ENCODE measurements at regions of chr17 and their contacts with region 1.

Region 1: DNA sequence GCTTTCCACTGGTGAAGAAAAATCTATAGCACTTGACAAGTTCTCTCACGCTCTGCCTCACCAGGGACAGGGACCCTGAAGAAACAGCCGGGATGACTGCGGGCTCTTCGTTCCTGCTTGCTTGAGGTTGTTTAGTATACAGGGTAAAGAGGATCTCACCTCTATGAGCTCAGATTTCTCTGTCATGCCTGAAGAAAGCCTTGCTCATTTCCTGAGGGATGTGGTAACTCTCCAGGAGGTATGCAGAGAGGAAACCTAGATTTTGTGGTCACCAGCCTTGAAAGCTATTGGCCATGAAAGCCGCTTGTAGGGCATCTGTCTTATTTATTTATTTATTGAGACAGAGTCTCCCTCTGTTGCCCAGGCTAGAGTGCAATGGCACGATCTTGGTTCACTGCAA is 23.2 kb downstream of the USP43 start:
- DNase-seq: no peak
- ATAC-seq: no peak
- H3K4me3 ChIP-seq: no peak overlapping the region
- H3K4me3 Mint-ChIP-seq: no peak overlapping the region
- H3K27ac ChIP-seq: no peak overlapping the region
- H3K27ac Mint-ChIP-seq: no peak overlapping the region
- H3K4me1 ChIP-seq: peaks cover 28% of the 10 kb centered on the region
- H3K4me1 Mint-ChIP-seq: peaks cover 32 to 36% of the 10 kb centered on the region in 2 donors
- H3K27me3 ChIP-seq: no peaks in the 10 kb centered on the region
- H3K27me3 Mint-ChIP-seq: peaks cover 0 to 5% of the 10 kb centered on the region in 2 donors
- CTCF ChIP-seq: no peak

Region 2: DNA sequence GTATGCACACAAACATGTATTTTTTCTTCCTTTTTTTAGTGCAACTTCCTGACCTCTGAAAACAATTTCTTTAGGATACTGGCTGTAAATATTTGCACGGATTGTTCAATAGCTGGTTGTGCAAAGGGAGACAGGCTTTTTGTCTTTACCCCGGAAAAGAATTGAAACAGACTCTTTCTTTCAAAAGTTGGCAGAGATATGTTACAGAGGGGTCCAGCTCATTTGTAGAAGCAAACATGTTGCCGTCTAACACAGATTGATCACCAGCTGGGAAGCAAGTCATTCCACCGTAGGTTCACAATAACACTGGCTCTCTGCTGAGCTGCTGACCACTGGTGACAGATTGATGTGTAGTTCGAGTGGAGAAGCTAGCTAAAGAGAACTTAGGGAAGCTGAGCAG is 223.8 kb before region 1 on chr17:
- intact Hi-C with region 1: no loop called
- DNase-seq: no peak
- ATAC-seq: no peak
- H3K4me3 ChIP-seq: no peak overlapping the region
- H3K4me3 Mint-ChIP-seq: no peak overlapping the region
- H3K27ac ChIP-seq: no peak overlapping the region
- H3K27ac Mint-ChIP-seq: no peak overlapping the region
- H3K4me1 ChIP-seq: no peaks in the 10 kb centered on the region
- H3K4me1 Mint-ChIP-seq: peaks cover 16 to 24% of the 10 kb centered on the region in 2 donors
- H3K27me3 ChIP-seq: no peaks in the 10 kb centered on the region
- H3K27me3 Mint-ChIP-seq: no peaks in the 10 kb centered on the region
- CTCF ChIP-seq: no peak

Region 3: GRCh38 chr17:9575381-9576101 is 93.0 kb before region 1 on chr17 and contains the start of gene STX8:
- intact Hi-C with region 1: loop called (anchors 5 kb)
- DNase-seq: peak; percentile 80
- ATAC-seq: peak; percentile 83 to 89 (median 88)
- H3K4me3 ChIP-seq: peak within 1 kb of the TSS; percentile 93
- H3K4me3 Mint-ChIP-seq: peak within 1 kb of the TSS; percentile 100
- H3K27ac ChIP-seq: peak within 1 kb of the TSS; percentile 31
- H3K27ac Mint-ChIP-seq: peak within 1 kb of the TSS; percentile 93 to 99
- H3K4me1 ChIP-seq: peaks cover 15% of the 10 kb centered on the region
- H3K4me1 Mint-ChIP-seq: peaks cover 39 to 51% of the 10 kb centered on the region in 2 donors
- H3K27me3 ChIP-seq: no peaks in the 10 kb centered on the region
- H3K27me3 Mint-ChIP-seq: no peaks in the 10 kb centered on the region
- CTCF ChIP-seq: no peak
- total RNA-seq, gene STX8: 96.3 to 141 (median 120) TPM

Measured in natural killer cell (primary cell).